Activated B cell treated with CpG ODN at 0.5 μM for 24 hours (primary cell): ENCODE measurements at regions of chr4 and their contacts with region 1.

Region 1: DNA sequence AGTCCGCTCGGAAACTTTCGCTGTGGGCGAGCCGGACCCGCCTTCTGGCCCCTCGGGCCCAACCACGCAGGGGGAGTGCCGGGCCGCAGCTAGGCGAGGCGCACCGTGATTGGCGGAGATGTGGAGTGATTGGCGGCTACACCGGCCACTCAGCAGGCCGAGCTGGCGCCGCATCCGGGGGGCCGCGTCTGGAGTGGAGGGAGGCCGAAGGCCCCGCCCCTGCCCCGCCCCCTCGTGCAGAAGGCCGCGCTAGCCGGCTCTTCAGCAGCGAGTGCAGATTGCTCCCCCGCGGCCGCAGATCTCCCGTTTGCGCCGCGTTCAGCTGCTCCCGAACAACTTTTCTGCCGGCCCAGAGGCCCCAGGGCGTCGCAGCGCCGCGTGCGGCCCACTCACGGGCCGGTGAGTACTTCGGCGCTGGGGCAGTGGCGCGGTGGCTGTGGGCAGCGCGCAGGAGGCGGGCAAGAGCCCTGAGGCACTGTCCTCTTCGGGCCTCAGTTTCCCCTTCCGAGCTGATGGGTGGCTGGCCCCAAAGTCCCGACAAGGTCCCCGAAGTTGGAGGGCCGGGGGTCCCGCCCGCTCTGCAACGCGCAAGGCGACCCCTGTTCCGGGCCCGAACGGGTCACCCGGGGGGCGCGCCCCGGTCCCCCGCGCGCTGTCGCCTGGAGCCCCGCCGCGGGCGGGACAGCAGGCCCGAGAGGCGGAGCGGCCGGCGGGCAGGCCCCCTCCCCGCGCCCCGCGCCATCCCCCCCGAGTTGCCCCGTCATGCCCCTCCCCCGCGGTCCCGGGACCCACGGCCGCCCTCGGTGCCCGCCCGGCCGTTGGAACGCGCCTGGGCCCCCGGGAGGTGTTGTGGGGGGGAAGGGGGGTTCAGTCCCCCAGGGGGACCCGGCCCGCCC is at the start of gene WFS1:
- DNase-seq: peak; percentile 97
- ATAC-seq: peak; percentile 99
- H3K4me3 Mint-ChIP-seq: peak within 1 kb of the TSS; percentile 86
- H3K27ac Mint-ChIP-seq: peak within 1 kb of the TSS; percentile 63
- H3K4me1 Mint-ChIP-seq: peaks cover 29% of the 10 kb centered on the region
- H3K27me3 Mint-ChIP-seq: no peaks in the 10 kb centered on the region
- CTCF ChIP-seq: no peak
- total RNA-seq, gene WFS1: 2.4 and 4.3 TPM in 2 replicates

Region 2: DNA sequence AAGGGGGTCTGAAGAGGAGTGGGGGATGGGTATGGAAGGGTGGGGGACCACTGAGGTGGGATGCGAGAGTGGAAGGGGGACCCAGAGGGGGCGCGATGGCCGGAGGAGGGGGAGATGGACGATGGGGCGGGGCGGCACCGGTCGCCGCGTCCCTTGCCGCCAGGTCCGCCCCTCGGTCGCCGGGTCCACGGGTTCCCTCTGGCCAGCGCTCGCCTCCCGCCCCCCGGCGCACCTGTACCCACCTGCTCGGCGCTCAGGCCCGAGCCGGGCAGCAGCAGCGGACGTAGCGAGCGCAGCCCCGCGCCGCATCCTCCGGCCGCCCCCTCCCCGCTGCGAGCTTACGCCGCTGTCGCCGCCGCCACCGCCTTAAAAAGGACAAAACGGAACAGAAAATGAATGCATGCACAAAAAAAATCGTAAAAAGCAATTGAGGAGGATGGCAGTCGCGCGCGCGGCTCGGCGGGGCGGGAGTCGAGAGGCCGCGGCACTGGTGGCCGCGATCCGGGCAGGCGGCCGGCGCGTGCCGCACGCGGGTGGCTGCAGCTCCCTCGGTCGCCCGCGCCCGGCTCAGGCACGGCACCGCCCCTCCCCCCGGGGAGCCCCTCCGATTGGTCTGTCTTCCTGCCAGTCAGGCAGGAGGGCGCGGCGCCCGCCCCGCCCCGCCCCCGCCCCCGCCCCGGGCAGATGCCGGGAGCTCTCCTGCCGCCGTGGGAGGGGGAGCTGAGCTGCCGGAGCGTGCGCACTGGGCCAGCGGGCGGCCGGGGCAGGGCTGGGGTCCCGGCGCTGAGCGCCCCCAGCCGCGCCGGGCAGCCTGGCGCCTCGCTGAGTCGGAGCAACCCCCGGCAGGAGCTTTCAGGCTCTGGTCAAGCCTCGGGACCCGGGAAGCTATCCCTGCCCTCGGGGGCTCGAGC is 69.6 kb before region 1 on chr4 and contains the start of gene JAKMIP1:
- CTCF ChIA-PET with region 1: no interaction called
- POLR2A ChIA-PET with region 1: no interaction called
- intact Hi-C with region 1: loop called (anchors 2 kb)
- DNase-seq: peak; percentile 63
- ATAC-seq: peak; percentile 91
- H3K4me3 Mint-ChIP-seq: peak within 1 kb of the TSS; percentile 72
- H3K27ac Mint-ChIP-seq: no peak within 1 kb of the TSS
- H3K4me1 Mint-ChIP-seq: peaks cover 21% of the 10 kb centered on the region
- H3K27me3 Mint-ChIP-seq: peaks cover 32% of the 10 kb centered on the region
- CTCF ChIP-seq: no peak
- total RNA-seq, gene JAKMIP1: 0.13 TPM in 1 of 2 replicates, not detected in the other

Region 3: DNA sequence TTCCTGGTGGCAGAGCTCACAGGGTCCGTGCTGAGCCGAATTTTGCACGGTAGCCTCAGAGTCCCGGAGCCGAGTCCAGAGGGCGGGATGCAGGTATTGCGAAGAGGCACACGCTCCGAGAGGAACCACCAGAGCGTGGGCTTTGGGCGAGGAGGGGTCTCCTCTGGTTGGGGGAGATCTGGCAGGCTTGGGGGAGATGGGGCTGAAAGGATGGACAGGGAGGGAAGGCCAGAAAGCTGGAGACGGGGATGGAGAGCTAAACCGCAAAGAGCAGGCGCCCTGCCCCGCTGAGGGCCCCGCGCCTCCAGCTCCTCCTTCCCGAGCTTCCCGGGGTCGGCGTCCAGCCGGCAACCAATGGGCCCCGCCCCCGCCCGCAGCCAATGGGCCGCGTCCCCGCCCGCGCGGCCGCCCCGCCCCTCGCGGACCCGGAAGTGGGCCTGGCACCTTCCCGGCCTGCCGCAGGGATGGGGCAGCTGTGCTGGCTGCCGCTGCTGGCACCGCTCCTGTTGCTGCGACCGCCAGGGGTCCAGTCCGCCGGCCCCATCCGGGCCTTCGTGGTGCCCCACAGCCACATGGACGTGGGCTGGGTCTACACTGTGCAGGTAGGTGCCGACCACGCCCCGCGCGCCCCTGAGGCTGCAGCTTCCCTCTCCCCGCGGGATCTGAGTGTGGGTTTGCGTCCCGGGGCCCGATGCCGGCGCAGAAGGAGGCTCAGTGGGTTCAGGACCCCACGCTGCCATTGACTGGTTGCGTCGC is 305.1 kb after region 1 on chr4 and contains the start of gene MAN2B2:
- CTCF ChIA-PET with region 1: no interaction called
- POLR2A ChIA-PET with region 1: no interaction called
- intact Hi-C with region 1: loop called (anchors 5 kb)
- DNase-seq: peak; percentile 86
- ATAC-seq: peak; percentile 96
- H3K4me3 Mint-ChIP-seq: peak within 1 kb of the TSS; percentile 88
- H3K27ac Mint-ChIP-seq: peak within 1 kb of the TSS; percentile 74
- H3K4me1 Mint-ChIP-seq: peaks cover 14% of the 10 kb centered on the region
- H3K27me3 Mint-ChIP-seq: no peaks in the 10 kb centered on the region
- CTCF ChIP-seq: no peak
- total RNA-seq, gene MAN2B2: 24.2 and 24.7 TPM in 2 replicates

Region 4: DNA sequence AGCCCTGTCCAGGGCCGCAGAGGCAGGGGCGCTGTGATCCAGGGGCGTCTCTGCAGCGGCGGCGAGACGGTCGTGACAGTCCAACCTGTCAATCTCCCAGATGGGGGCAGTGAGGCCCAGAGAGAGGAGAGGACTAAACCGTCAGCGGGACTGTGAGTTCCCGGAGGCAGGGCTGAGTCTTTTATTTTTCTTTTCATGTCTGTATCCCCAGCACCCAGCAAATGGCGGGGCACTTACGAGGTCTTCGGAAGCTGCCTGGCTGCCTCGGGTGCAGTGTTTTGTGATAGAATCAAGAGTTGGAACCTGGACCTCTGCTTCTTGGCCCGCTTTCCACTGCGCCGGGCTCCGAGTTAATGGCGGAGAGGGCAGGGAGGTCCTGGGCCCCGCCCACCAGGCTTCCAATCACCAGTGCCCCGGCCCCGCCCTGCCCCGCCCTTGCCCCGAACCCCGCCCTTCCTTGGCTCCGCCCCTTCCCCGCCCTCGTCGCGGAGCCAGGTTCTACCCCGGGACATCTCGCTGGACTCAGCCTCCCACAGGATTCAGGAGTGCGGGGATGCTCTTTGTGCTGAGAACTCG is 833.3 kb after region 1 on chr4:
- CTCF ChIA-PET with region 1: no interaction called
- POLR2A ChIA-PET with region 1: no interaction called
- intact Hi-C with region 1: loop called (anchors 1 kb)
- DNase-seq: peak; percentile 65
- ATAC-seq: peak; percentile 96
- H3K4me3 Mint-ChIP-seq: peak overlapping the region; percentile 91
- H3K27ac Mint-ChIP-seq: peak overlapping the region; percentile 46
- H3K4me1 Mint-ChIP-seq: peaks cover 20% of the 10 kb centered on the region
- H3K27me3 Mint-ChIP-seq: peaks cover under 1% of the 10 kb centered on the region
- CTCF ChIP-seq: no peak